ENCODE measurements at regions of chr3 and their contacts with region 1.

Region 1: DNA sequence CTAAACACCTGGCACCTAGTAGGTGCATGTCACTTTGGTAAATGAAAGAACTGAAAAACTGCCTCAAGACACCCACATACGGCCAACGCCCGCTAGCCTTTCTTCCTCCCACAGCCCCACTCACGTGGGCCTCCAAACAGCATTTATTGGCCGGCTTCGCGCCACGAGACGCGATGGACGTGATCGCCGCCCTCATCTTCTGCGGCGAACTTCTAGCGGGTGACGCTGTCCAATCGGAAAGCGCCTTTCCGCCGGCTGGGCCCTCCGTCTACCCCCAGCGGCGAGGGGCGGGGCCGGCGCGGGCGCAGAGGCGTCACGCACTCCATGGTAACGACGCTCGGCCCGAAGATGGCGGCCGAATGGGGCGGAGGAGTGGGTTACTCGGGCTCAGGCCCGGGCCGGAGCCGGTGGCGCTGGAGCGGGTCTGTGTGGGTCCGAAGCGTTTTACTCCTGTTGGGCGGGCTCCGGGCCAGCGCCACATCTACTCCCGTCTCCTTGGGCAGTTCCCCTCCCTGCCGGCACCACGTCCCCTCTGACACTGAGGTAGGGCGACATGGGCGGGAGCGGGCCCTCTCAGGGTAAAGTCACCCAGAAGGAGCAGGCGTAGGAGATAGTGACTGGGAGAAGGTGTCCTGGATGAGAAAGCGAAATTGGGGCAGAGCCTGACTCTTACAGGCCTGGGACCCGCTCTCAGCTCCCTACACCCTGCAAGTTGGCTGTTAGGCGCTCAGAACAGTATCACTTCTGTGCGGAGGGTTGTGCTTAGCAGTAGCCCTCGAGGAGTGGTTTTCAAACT is at the start of gene LMLN:
- DNase-seq: peak; percentile 97
- H3K4me3 ChIP-seq: peak within 1 kb of the TSS; percentile 74 to 98 (median 84)
- H3K4me3 Mint-ChIP-seq: peak within 1 kb of the TSS; percentile 89 to 95
- H3K27ac ChIP-seq: peak within 1 kb of the TSS; percentile 37 to 88
- H3K27ac Mint-ChIP-seq: peak within 1 kb of the TSS; percentile 93 to 97 (median 96)
- H3K4me1 ChIP-seq: peaks cover 50 to 55% of the 10 kb centered on the region in 2 donors
- H3K4me1 Mint-ChIP-seq: peaks cover 55% of the 10 kb centered on the region
- H3K27me3 ChIP-seq: no peaks in the 10 kb centered on the region
- H3K27me3 Mint-ChIP-seq: no peaks in the 10 kb centered on the region
- CTCF ChIP-seq: no peak
- polyA plus RNA-seq, gene LMLN: 0.41 to 1.3 (median 1.00) TPM

Region 2: GRCh38 chr3:197949754-197950660 is 10.1 kb before region 1 on chr3 and contains the start of gene RPL35A:
- intact Hi-C with region 1: loop called in 1 of 2 experiments (anchors 1 kb)
- DNase-seq: peak; percentile 88 to 95 (median 92)
- H3K4me3 ChIP-seq: peak within 1 kb of the TSS; percentile 82 to 98 (median 83)
- H3K4me3 Mint-ChIP-seq: peak within 1 kb of the TSS; percentile 94 to 98
- H3K27ac ChIP-seq: peak within 1 kb of the TSS; percentile 78 to 96
- H3K27ac Mint-ChIP-seq: peak within 1 kb of the TSS; percentile 97 to 100 (median 99)
- H3K4me1 ChIP-seq: peaks cover 18 to 26% of the 10 kb centered on the region in 2 donors
- H3K4me1 Mint-ChIP-seq: peaks cover 28% of the 10 kb centered on the region
- H3K27me3 ChIP-seq: no peaks in the 10 kb centered on the region
- H3K27me3 Mint-ChIP-seq: peaks cover 0 to 5% (median 2%) of the 10 kb centered on the region in 3 donors
- CTCF ChIP-seq: no peak
- polyA plus RNA-seq, gene RPL35A: 882 to 1,113 (median 975) TPM

Region 3: GRCh38 chr3:198080521-198081280 is 120.6 kb after region 1 on chr3:
- intact Hi-C with region 1: loop called in 1 of 2 experiments (anchors 10 kb)
- DNase-seq: peak; percentile 63 to 81 (median 80)
- H3K4me3 ChIP-seq: peak overlapping the region; percentile 39 to 74 (median 40)
- H3K4me3 Mint-ChIP-seq: peak overlapping the region; percentile 90 to 92
- H3K27ac ChIP-seq: no peak overlapping the region
- H3K27ac Mint-ChIP-seq: peak overlapping the region; percentile 42 to 91 (median 89)
- H3K4me1 ChIP-seq: peaks cover 16 to 18% of the 10 kb centered on the region in 2 donors
- H3K4me1 Mint-ChIP-seq: peaks cover 8% of the 10 kb centered on the region
- H3K27me3 ChIP-seq: peaks cover 41 to 66% of the 10 kb centered on the region in 2 donors
- H3K27me3 Mint-ChIP-seq: peaks cover 33 to 72% (median 51%) of the 10 kb centered on the region in 3 donors
- CTCF ChIP-seq: peak; percentile 84